ENCODE measurements at regions of chr14 and their contacts with region 1.

Region 1: GRCh38 chr14:103104654-103105452 is 10.3 kb downstream of the EXOC3L4 start:
- DNase-seq: peak in 1 of 2 donors; percentile 77
- H3K4me3 ChIP-seq: no peak overlapping the region
- H3K27ac ChIP-seq: no peak overlapping the region
- H3K4me1 ChIP-seq: peaks cover 0 to 4% of the 10 kb centered on the region in 2 donors
- H3K27me3 ChIP-seq: peaks cover 17 to 26% of the 10 kb centered on the region in 2 donors
- CTCF ChIP-seq: peak; percentile 96 to 100 (median 98)
- POLR2A ChIP-seq: peak in 1 of 2 donors; percentile 22

Region 2: DNA sequence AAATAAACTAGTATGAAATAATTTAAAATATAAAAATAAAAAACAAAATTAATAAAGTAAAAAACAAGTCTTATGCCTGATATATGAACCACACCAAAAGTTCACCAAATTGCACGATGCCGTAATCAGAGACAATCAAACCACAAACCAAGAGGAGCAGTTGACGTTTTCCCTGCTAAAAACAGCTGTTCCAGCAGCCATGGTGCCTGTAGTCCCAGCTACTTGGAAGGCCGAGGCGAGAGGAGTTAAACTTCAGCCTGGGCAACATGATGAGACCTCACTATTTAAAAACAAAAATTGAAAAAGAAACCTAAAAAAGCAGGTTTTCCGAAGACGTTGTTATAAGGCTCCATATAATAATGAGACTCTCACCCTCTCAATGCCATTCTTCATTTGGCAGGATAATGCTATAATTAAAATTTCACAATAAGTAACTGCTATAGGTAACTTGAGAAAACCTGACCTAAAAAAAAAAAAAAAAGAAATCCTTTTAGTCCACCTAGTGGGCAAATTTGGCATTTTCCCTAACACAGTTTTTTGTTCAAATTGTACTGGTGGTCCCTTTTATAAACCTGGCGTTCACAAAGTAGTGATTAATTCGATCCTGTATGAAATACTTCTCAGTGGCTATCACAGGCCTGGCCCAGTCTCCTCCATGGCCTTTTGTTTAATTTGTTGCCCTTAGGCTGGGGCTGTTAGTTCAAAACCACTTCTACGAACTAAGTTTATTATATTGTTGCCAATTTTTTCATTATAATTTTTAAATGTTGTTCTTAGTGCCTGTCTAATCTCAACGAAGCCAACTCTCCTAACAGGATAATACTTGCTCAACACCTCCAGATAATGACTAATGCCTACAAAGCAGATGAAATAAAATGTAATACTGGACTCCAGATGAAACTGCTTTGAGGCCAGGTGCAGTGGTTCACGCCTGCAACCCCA is 80.5 kb after region 1 on chr14:
- intact Hi-C with region 1: loop called (anchors 10 kb)
- DNase-seq: no peak
- H3K4me3 ChIP-seq: no peak overlapping the region
- H3K27ac ChIP-seq: peak overlapping the region in 1 of 2 donors; percentile 28
- H3K4me1 ChIP-seq: no peaks in the 10 kb centered on the region
- H3K27me3 ChIP-seq: no peaks in the 10 kb centered on the region
- CTCF ChIP-seq: peak; percentile 57 to 66 (median 62)
- POLR2A ChIP-seq: no peak

Region 3: GRCh38 chr14:103292426-103293374 is 187.8 kb after region 1 on chr14:
- intact Hi-C with region 1: loop called (anchors 2 kb)
- DNase-seq: peak; percentile 77 to 81
- H3K4me3 ChIP-seq: no peak overlapping the region
- H3K27ac ChIP-seq: no peak overlapping the region
- H3K4me1 ChIP-seq: no peaks in the 10 kb centered on the region
- H3K27me3 ChIP-seq: no peaks in the 10 kb centered on the region
- CTCF ChIP-seq: peak; percentile 91 to 97 (median 95)
- POLR2A ChIP-seq: peak in 1 of 2 donors; percentile 25

Region 4: DNA sequence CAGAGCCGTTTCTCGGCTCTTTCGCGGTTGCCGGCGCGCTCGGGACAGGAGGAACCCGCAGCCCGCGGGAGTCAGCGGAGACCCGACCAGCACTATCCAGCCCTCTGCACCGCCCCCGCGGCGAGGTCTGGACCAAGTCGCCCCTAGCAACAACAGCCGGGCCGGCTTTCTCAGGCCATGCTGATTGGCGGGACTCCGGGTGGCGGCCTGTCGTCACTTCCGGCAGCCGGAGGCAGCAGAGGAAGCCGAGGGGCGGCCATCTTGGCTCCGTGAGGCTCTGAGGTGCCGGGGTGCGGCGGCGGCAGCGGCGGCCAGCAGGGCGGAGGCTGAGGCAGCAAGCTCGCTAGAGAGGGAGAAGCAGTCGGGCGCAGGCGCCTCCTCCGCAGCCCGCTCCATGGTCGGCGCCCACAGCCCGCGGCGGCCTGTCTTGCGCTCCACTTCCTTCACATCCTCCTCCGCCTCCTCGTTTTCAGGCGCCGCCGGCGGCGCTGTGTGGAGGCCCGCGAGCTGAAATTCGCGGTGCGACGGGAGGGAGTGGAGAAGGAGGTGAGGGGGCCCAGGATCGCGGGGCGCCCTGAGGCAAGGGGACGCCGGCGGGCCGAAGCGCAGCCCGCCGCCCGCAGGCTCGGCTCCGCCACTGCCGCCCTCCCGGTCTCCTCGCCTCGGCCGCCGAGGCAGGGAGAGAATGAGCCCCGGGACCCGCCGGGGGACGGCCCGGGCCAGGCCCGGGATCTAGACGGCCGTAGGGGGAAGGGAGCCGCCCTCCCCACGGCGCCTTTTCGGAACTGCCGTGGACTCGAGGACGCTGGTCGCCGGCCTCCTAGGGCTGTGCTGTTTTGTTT is 280.5 kb after region 1 on chr14 and contains the start of gene MARK3:
- intact Hi-C with region 1: no loop called
- DNase-seq: peak; percentile 97
- H3K4me3 ChIP-seq: peak within 1 kb of the TSS; percentile 81 to 95
- H3K27ac ChIP-seq: peak within 1 kb of the TSS; percentile 97 to 98
- H3K4me1 ChIP-seq: peaks cover 0 to 11% of the 10 kb centered on the region in 2 donors
- H3K27me3 ChIP-seq: no peaks in the 10 kb centered on the region
- CTCF ChIP-seq: peak in 3 of 4 experiments; percentile 21 to 39 (median 21)
- POLR2A ChIP-seq: peak; percentile 85 to 95
- total RNA-seq, gene MARK3: 50.7 to 111 (median 89.1) TPM